ENCODE measurements at regions of chr2 and their contacts with region 1.

Region 1: GRCh38 chr2:112433932-112434730 is 686 bp upstream of the RGPD8 start:
- DNase-seq: peak in 1 of 2 donors; percentile 64
- H3K4me3 ChIP-seq: no peak overlapping the region
- H3K27ac ChIP-seq: no peak overlapping the region
- H3K4me1 ChIP-seq: peaks cover 0 to 8% of the 10 kb centered on the region in 2 donors
- H3K27me3 ChIP-seq: no peaks in the 10 kb centered on the region
- CTCF ChIP-seq: no peak

Region 2: DNA sequence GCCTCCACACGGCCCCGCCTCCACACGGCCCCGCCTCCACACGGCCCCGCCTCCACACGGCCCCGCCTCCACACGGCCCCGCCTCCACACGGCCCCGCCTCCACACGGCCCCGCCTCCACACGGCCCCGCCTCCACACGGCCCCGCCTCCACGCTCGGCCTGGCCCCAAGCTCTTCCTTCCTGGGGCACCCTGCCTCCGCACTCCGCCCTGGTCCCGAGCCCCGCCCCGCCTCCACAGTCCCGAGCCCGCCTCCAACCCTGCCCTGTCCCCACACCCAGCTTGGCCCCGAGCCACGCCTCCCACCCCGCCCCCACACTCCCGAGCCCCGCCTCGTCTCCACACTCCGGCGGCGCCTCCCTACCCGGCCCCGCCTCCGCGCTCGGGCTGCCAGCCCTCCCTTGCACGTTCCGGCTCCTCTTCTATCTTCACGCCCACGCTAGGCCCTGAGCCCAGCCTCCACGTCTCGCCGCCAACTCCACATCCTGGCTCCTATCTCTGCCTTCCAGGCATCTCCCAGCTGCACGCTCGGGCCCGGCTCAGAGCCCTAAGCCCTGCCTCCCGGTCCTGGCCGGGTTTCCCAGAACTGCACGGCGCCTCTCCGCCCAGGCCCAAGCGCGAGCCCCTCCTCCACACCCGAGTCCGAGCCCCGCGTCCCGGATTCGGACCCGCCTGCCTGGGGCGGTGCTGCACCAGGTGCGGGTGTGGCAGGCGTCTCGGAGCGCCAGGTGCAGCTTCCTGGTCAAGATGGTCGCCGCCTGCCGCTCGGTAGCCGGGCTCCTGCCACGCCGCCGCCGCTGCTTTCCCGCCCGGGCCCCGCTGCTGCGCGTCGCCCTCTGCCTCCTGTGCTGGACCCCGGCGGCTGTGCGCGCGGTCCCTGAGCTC is 379.0 kb before region 1 on chr2 and contains the start of gene TMEM87B:
- intact Hi-C with region 1: loop called (anchors 5 kb)
- DNase-seq: peak; percentile 88 to 98
- H3K4me3 ChIP-seq: peak within 1 kb of the TSS; percentile 78 to 98
- H3K27ac ChIP-seq: peak within 1 kb of the TSS; percentile 96 to 98
- H3K4me1 ChIP-seq: peaks cover 0 to 21% of the 10 kb centered on the region in 2 donors
- H3K27me3 ChIP-seq: no peaks in the 10 kb centered on the region
- CTCF ChIP-seq: no peak
- total RNA-seq, gene TMEM87B: 11.7 TPM

Region 3: DNA sequence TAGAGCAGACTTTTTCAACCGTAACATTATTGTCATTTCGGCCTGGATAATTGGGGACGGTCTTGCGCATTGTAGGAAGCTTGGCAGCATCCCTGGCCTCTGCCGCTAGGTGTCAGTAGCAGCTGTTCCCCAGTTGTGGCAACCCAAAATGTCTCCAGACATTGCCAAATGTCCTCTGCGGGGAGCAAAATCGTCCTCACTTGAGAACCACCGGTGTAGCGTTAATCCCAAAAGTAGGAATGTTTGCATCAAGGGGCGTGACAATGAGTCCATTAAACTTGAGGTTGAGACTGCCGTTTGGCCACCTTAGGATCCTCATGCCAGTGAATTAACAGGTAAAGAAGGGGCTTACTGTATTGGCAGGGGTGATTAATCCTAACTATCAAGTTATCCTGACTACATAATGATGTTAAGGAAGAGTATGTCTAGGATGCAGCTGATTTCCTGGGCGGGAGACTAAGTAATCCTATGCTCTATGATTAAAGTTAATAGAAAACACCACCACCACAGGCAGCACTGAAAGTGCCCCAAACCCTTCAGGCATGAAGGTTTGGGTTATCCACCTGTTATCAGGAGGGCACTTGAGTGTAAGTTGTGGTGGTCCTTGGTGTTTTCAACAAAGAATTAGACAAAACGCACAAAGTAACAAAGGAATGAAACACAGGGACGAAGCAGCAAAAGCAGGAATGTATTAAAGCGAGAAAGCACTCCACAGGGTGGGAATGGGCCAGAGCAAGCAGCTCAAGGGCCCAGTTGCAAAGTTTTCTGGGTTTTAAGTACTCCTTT is 174.4 kb before region 1 on chr2:
- intact Hi-C with region 1: loop called (anchors 2 kb)
- DNase-seq: peak; percentile 43 to 92
- H3K4me3 ChIP-seq: peak overlapping the region; percentile 29 to 46
- H3K27ac ChIP-seq: no peak overlapping the region
- H3K4me1 ChIP-seq: no peaks in the 10 kb centered on the region
- H3K27me3 ChIP-seq: no peaks in the 10 kb centered on the region
- CTCF ChIP-seq: peak; percentile 82 to 94 (median 91)